ENCODE measurements at regions of chr10 and their contacts with region 1.

Region 1: DNA sequence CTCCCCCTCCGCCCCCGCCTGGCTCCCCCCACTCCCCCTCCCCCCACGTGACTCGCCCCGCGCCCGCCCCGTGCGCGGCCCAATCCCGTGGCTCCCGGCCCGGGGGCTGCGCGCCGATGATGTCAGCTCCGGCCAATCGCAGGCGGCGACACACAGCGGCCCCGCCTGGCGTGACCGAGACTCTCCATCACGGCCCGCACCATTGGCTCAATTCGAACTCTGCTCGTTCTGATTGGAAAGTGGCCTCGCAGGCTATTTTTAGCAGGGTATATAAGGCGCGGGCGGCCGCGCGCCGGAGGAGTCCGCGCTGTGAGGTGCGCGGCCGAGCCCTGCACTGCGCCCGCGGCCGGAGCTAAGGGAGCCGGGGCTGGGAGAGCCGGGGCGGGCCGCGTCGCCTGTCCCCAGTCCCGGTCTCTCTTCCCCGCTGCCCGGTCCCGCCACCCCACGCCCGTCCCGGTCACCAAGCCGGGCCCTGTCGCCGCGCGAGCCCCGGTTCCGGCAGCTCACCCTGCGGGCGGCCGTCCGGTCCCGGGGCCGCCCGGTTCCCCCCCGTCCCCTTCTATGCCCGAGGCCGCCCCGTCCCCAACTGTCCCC is 345 bp upstream of the KLF6 start:
- DNase-seq: peak; percentile 85 to 98
- H3K4me3 ChIP-seq: peak overlapping the region; percentile 85
- H3K27ac ChIP-seq: peak overlapping the region; percentile 92
- H3K4me1 ChIP-seq: peaks cover 26% of the 10 kb centered on the region
- H3K27me3 ChIP-seq: no peaks in the 10 kb centered on the region
- CTCF ChIP-seq: no peak

Region 2: GRCh38 chr10:3197348-3198003 is 587.9 kb before region 1 on chr10:
- CTCF ChIA-PET with region 1: interaction called, 3 read pairs
- POLR2A ChIA-PET with region 1: interaction called, 11 read pairs
- intact Hi-C with region 1: loop called (anchors 1 kb)
- DNase-seq: peak; percentile 85 to 86
- H3K4me3 ChIP-seq: peak overlapping the region; percentile 53; the same call in 1 of the 2 replicates
- H3K27ac ChIP-seq: peak overlapping the region; percentile 79
- H3K4me1 ChIP-seq: peaks cover 10% of the 10 kb centered on the region
- H3K27me3 ChIP-seq: no peaks in the 10 kb centered on the region
- CTCF ChIP-seq: peak; percentile 79

Region 3: DNA sequence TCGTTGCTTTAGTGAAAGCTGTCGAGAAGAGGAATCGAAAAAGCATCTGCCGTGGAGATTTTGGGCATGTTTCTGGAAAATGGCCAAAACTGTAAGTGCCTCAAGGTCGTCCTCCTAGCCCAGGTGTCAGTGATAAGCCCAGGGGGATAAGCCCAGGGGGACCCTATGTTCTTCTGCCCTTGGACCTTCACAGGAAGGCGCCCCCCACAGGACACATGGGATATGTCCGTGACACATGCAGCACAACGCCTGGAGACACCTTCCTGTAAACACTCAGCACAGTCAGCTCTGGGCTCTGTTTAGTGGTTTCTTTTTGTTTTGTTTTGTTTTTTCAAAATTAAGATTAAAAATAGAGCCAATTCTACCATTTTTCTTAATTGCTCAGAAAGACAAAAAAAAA is 273.1 kb before region 1 on chr10:
- CTCF ChIA-PET with region 1: no interaction called
- POLR2A ChIA-PET with region 1: no interaction called
- intact Hi-C with region 1: no loop called
- DNase-seq: no peak
- H3K4me3 ChIP-seq: no peak overlapping the region
- H3K27ac ChIP-seq: no peak overlapping the region
- H3K4me1 ChIP-seq: no peaks in the 10 kb centered on the region
- H3K27me3 ChIP-seq: no peaks in the 10 kb centered on the region
- CTCF ChIP-seq: no peak

Region 4: GRCh38 chr10:3532644-3533043 is 252.7 kb before region 1 on chr10:
- CTCF ChIA-PET with region 1: no interaction called
- POLR2A ChIA-PET with region 1: no interaction called
- intact Hi-C with region 1: loop called (anchors 5 kb)
- DNase-seq: peak; percentile 65 to 78
- H3K4me3 ChIP-seq: peak overlapping the region; percentile 46; the same call in 1 of the 2 replicates
- H3K27ac ChIP-seq: peak overlapping the region; percentile 96
- H3K4me1 ChIP-seq: peaks cover 17% of the 10 kb centered on the region
- H3K27me3 ChIP-seq: no peaks in the 10 kb centered on the region
- CTCF ChIP-seq: no peak

Region 5: DNA sequence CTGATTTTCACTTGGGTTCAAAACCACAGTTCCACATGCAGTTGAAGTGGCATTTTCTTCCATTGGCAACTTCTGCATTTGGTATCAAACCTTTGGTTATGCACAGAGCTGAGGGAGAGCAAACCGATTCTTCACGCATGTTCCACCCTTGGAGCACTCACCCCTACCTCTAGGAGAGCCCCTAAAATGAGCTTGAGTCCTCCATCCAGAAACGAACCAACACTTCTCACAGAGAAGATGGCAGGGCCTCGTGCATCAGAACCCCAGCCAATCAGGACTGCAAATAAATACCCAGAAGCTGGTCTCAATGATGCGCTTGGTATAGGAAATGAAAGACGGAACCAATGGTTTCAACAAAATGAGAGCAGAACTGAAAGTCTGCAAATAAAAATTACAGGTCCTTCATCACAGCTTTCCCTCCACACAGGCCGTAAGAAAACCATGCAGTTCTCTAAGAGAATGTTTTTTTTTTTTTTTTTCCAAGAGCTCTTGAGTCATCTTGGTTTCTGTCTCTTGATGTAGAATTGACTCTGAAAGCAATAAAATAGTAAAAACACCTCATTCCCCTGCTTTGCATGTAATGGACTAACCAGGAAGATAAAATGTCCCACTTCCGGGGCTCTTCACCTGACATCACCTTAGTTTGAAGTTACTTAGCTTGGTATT is 24.2 kb before region 1 on chr10:
- CTCF ChIA-PET with region 1: interaction called, 3 read pairs
- POLR2A ChIA-PET with region 1: interaction called, 8 read pairs
- intact Hi-C with region 1: loop called (anchors 1 kb)
- DNase-seq: peak in 1 of 2 experiments; percentile 53
- H3K4me3 ChIP-seq: 0 out of 2 replicates have a peak overlapping the region, but pooled peaks have one; percentile 12
- H3K27ac ChIP-seq: peak overlapping the region; percentile 100
- H3K4me1 ChIP-seq: peaks cover 89% of the 10 kb centered on the region
- H3K27me3 ChIP-seq: no peaks in the 10 kb centered on the region
- CTCF ChIP-seq: no peak

Region 6: DNA sequence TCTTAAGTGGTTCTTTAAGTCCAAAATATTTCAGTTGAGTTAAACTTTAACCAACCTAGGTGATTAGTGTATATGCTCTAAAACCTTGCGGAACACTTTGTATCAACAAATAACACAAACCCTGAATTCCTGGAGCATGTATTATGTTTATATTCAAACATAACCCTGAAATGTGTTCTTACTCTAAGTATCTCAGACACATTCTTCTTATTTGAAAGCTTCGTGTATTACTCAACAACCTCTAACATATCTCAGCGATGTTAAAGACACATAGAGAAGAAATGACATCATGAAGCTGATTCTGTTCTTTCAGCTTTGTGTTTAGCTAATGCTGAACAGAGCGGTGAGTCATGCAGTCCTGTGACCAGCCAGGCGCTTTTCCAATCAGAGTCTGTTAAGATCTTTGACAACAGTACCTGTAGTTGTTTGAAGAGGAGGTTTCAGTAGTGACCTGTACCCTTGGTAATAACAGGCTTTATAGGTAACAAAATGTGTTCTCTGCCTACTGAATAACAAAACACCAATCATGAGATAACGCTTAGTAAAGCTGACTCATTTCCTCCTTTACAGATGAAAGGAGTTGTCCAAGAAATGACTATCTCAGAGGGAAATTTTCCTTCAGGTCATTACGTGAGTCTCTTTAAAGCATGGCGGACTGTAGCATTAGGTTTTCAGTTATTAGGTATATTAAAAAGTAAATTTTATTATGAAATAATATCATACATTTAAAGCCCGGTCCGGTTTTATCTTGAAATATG is 67.0 kb after region 1 on chr10:
- CTCF ChIA-PET with region 1: interaction called, 3 read pairs
- POLR2A ChIA-PET with region 1: interaction called, 15 read pairs
- intact Hi-C with region 1: loop called (anchors 1 kb)
- DNase-seq: peak; percentile 74 to 99
- H3K4me3 ChIP-seq: peak overlapping the region; percentile 16; the same call in 1 of the 2 replicates
- H3K27ac ChIP-seq: peak overlapping the region; percentile 96
- H3K4me1 ChIP-seq: peaks cover 28% of the 10 kb centered on the region
- H3K27me3 ChIP-seq: no peaks in the 10 kb centered on the region
- CTCF ChIP-seq: no peak

Region 7: DNA sequence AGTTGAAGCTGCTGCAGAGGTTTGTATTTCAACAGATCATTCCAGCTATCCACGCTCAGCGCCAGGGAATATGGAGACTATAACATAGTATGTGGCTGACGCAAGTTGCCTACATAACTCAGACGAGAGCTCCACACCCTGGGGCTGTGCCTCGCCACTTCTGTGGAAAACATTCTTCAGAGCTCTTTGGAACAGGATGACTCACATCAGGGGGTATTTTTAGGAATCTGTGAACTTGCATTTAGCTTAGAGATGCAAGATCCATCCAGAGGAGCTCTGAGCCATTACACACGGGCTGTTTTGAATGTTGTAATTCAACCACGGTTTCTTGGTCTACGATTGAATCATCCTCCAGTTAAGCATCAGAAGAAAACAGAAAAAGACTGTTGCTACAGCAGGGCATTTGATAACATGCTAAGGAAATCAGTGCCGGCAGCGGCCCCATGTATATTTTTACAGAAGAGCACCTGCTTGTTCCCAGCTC is 559.2 kb after region 1 on chr10:
- CTCF ChIA-PET with region 1: no interaction called
- POLR2A ChIA-PET with region 1: interaction called, 3 read pairs
- intact Hi-C with region 1: loop called (anchors 1 kb)
- DNase-seq: peak; percentile 87 to 97
- H3K4me3 ChIP-seq: peak overlapping the region; percentile 16; the same call in 1 of the 2 replicates
- H3K27ac ChIP-seq: peak overlapping the region; percentile 93
- H3K4me1 ChIP-seq: peaks cover 23% of the 10 kb centered on the region
- H3K27me3 ChIP-seq: no peaks in the 10 kb centered on the region
- CTCF ChIP-seq: no peak

Measured in PC-9 (cell line).